ENCODE measurements at regions of chr17 and their contacts with region 1.

Region 1: GRCh38 chr17:40345161-40345993 is 19.2 kb downstream of the GJD3 start:
- DNase-seq: peak; percentile 83 to 90
- ATAC-seq: peak; percentile 49
- H3K4me3 ChIP-seq: peak overlapping the region in 1 of 2 donors; percentile 42
- H3K27ac ChIP-seq: peak overlapping the region in 1 of 2 donors; percentile 60
- H3K4me1 ChIP-seq: no peaks in the 10 kb centered on the region
- H3K27me3 ChIP-seq: no peaks in the 10 kb centered on the region

Region 2: GRCh38 chr17:40311575-40311974 is 33.8 kb before region 1 on chr17:
- intact Hi-C with region 1: loop called in 1 of 2 experiments (anchors 2 kb)
- DNase-seq: peak in 1 of 2 donors; percentile 80
- ATAC-seq: no peak
- H3K4me3 ChIP-seq: no peak overlapping the region
- H3K27ac ChIP-seq: peak overlapping the region; percentile 53 to 90
- H3K4me1 ChIP-seq: peaks cover 5 to 14% of the 10 kb centered on the region in 2 donors
- H3K27me3 ChIP-seq: no peaks in the 10 kb centered on the region

Region 3: DNA sequence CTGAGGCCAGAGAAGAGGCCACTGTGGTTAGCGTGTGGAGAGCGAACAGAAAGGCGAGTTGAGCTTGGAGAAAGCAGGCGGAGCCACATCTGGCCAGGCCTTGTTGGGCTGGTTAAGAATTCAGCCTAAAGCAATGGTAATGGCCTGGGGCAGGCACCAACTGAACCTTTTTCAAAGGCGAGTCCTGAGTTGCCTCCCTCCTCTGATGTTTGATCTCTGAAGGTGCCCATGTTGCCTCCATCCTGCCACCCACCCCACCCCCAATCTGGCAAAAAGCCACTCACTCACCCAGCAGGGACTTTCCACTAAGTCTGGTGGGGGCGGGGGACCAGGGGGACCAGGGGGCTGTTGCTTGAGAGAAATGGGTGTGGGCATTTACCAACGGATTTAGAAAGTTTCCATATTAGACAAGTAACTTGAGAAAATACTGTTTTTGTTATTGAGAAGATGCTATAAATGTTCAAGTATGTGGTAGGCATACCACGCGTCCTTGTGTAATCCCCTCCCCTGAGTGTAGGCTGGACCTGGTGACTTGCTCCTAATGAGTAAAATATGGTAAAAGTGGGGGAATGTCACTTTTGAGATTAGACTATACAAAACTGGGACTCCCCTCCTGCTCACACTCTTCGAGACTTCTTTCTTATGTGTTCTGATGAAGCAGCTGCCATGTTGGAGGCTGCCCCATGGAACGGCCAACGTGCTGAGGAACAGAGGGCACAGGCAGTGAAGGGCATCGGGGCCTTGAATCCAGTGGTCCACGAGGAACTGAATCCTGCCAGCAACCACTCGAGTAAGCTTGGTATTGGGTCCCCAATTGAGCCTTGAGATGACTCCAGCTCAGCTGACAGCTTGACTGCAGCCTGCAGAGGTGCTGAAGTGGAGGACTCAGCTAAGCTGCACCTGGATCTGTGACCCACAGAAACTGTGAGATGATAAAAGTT is 185.9 kb after region 1 on chr17:
- intact Hi-C with region 1: no loop called
- DNase-seq: peak in 1 of 2 donors; percentile 54
- ATAC-seq: no peak
- H3K4me3 ChIP-seq: no peak overlapping the region
- H3K27ac ChIP-seq: no peak overlapping the region
- H3K4me1 ChIP-seq: no peaks in the 10 kb centered on the region
- H3K27me3 ChIP-seq: no peaks in the 10 kb centered on the region

Measured in aorta (tissue), 5 donors.